Caco-2 (cell line): ENCODE measurements at regions of chr1 and their contacts with region 1.

Region 1: GRCh38 chr1:232385221-232385620 is 244.7 kb downstream of the SIPA1L2 start:
- DNase-seq: no peak
- H3K4me3 ChIP-seq: no peak overlapping the region
- H3K4me3 Mint-ChIP-seq: no peak overlapping the region
- H3K27ac Mint-ChIP-seq: no peak overlapping the region
- H3K4me1 ChIP-seq: peaks cover 16% of the 10 kb centered on the region
- H3K4me1 Mint-ChIP-seq: peaks cover 31% of the 10 kb centered on the region
- H3K27me3 ChIP-seq: no peaks in the 10 kb centered on the region
- H3K27me3 Mint-ChIP-seq: no peaks in the 10 kb centered on the region
- CTCF ChIP-seq: no peak

Region 2: GRCh38 chr1:231861541-231862481 is 523.4 kb before region 1 on chr1:
- CTCF ChIA-PET with region 1: no interaction called
- POLR2A ChIA-PET with region 1: no interaction called
- intact Hi-C with region 1: no loop called
- DNase-seq: no peak
- H3K4me3 ChIP-seq: no peak overlapping the region
- H3K4me3 Mint-ChIP-seq: no peak overlapping the region
- H3K27ac Mint-ChIP-seq: no peak overlapping the region
- H3K4me1 ChIP-seq: no peaks in the 10 kb centered on the region
- H3K4me1 Mint-ChIP-seq: no peaks in the 10 kb centered on the region
- H3K27me3 ChIP-seq: no peaks in the 10 kb centered on the region
- H3K27me3 Mint-ChIP-seq: no peaks in the 10 kb centered on the region
- CTCF ChIP-seq: no peak

Region 3: DNA sequence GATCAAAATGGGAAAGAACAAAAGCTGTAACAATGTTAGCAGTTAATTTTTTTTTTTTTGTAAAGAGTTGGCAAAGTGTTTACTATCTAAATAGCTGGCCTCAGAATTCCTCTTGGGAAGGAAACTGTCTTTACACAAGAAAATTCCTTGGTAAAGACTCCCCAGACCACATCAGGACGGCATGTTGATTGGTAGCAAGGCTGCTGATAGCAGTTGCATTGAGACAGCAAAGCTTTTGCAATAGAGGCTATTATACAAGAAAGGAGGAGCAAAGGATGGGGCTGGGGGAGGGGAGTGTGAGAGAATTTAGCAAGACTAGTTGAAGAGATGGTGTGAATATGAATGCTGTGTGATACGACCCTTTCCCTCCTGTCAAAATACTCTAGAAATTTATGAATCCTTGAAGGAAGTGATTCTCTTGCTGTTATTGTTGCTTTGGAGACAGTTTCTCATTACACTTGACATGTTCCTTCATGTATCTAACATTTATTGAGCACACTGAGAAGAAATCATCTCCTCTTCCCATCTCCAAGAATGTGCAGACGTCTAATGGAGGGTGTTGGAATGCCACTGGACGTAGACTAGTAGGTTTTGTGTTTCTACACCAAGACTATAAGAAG is 110.9 kb before region 1 on chr1:
- CTCF ChIA-PET with region 1: no interaction called
- POLR2A ChIA-PET with region 1: interaction called, 10 read pairs
- intact Hi-C with region 1: no loop called
- DNase-seq: peak in 1 of 2 experiments; percentile 50
- H3K4me3 ChIP-seq: no peak overlapping the region
- H3K4me3 Mint-ChIP-seq: no peak overlapping the region
- H3K27ac Mint-ChIP-seq: no peak overlapping the region
- H3K4me1 ChIP-seq: peaks cover 10% of the 10 kb centered on the region; the same call in 1 of the 2 replicates
- H3K4me1 Mint-ChIP-seq: peaks cover 14% of the 10 kb centered on the region
- H3K27me3 ChIP-seq: no peaks in the 10 kb centered on the region
- H3K27me3 Mint-ChIP-seq: no peaks in the 10 kb centered on the region
- CTCF ChIP-seq: no peak

Region 4: GRCh38 chr1:232355162-232356004 is 29.8 kb before region 1 on chr1:
- CTCF ChIA-PET with region 1: no interaction called
- POLR2A ChIA-PET with region 1: no interaction called
- intact Hi-C with region 1: no loop called
- DNase-seq: no peak
- H3K4me3 ChIP-seq: no peak overlapping the region
- H3K4me3 Mint-ChIP-seq: no peak overlapping the region
- H3K27ac Mint-ChIP-seq: no peak overlapping the region
- H3K4me1 ChIP-seq: no peaks in the 10 kb centered on the region
- H3K4me1 Mint-ChIP-seq: no peaks in the 10 kb centered on the region
- H3K27me3 ChIP-seq: no peaks in the 10 kb centered on the region
- H3K27me3 Mint-ChIP-seq: no peaks in the 10 kb centered on the region
- CTCF ChIP-seq: no peak

Region 5: DNA sequence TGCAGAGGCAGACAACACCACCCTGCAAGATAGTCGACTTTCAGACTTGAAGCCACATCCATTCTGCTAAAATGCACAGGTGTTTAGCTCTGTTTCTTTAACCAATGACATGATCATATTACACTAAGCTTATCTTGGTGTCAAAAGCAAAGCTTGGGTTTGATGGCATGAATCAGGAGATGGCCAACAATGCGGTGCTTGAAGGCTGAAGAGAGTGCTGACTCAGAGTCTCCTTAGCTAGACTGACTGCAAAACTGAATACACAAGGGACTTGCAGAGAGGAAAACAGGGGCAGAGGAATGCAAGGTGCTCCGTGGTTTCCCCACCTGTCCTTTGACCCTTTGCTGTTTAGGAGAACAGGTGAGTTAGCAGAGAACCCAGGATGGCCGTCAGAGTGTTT is 17.9 kb before region 1 on chr1:
- CTCF ChIA-PET with region 1: no interaction called
- POLR2A ChIA-PET with region 1: no interaction called
- intact Hi-C with region 1: loop called (anchors 1 kb)
- DNase-seq: peak; percentile 51 to 64
- H3K4me3 ChIP-seq: no peak overlapping the region
- H3K4me3 Mint-ChIP-seq: no peak overlapping the region
- H3K27ac Mint-ChIP-seq: no peak overlapping the region
- H3K4me1 ChIP-seq: peaks cover 7% of the 10 kb centered on the region
- H3K4me1 Mint-ChIP-seq: peaks cover 7% of the 10 kb centered on the region
- H3K27me3 ChIP-seq: no peaks in the 10 kb centered on the region
- H3K27me3 Mint-ChIP-seq: no peaks in the 10 kb centered on the region
- CTCF ChIP-seq: no peak

Region 6: GRCh38 chr1:232553050-232553754 is 168.0 kb after region 1 on chr1:
- CTCF ChIA-PET with region 1: no interaction called
- POLR2A ChIA-PET with region 1: no interaction called
- intact Hi-C with region 1: loop called (anchors 10 kb)
- DNase-seq: no peak
- H3K4me3 ChIP-seq: no peak overlapping the region
- H3K4me3 Mint-ChIP-seq: no peak overlapping the region
- H3K27ac Mint-ChIP-seq: peak overlapping the region; percentile 76
- H3K4me1 ChIP-seq: peaks cover 55% of the 10 kb centered on the region
- H3K4me1 Mint-ChIP-seq: peaks cover 63% of the 10 kb centered on the region
- H3K27me3 ChIP-seq: no peaks in the 10 kb centered on the region
- H3K27me3 Mint-ChIP-seq: no peaks in the 10 kb centered on the region
- CTCF ChIP-seq: no peak